Heart left ventricle (tissue), 16 donors: ENCODE measurements at regions of chr10 and their contacts with region 1.

Region 1: GRCh38 chr10:17923728-17924127 is 28.0 kb upstream of the SLC39A12 start:
- DNase-seq: peak in 1 of 5 donors; percentile 22
- ATAC-seq: peak in 1 of 4 donors; percentile 58
- H3K4me3 ChIP-seq: no peak overlapping the region
- H3K27ac ChIP-seq: peak overlapping the region in 2 of 12 donors; percentile 14 to 39
- H3K4me1 ChIP-seq: peaks cover 0 to 15% (median 1%) of the 10 kb centered on the region in 12 donors
- H3K27me3 ChIP-seq: no peaks in the 10 kb centered on the region
- CTCF ChIP-seq: no peak
- POLR2A ChIP-seq: no peak

Region 2: DNA sequence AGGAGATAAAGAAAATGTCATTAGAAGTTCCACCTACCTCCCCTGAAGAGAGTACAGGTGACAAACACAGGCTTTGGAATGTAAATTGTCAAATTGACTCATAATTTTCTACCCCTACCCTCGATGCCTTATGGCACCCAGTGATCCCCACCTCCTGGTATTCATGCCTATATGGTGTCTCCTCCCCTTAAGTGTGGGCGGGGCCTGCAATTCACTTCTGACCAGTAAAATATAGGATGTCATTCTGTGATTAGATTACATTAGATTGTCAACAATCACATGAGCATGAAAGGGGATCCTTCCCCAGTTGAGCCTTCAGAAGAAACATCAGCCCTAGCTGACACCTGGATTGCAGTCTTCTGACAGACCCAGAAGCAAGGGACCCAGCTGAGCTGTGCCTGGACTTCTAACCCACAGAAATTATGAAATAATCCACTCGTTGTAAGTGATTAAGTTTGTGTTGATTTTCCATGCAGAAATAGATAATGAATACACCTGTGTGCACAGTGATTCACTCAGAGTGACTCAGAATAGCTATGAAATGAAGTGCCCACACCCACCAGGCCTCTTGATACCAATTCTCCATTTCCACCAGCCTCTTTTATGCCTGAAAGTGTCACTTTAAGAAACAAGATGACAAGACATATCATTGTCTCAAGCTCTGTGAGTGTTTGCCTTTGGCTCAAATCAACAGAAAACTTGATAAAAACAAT is 19.5 kb after region 1 on chr10:
- intact Hi-C with region 1: loop called in 1 of 10 experiments (anchors 2 kb)
- DNase-seq: no peak
- ATAC-seq: no peak
- H3K4me3 ChIP-seq: no peak overlapping the region
- H3K27ac ChIP-seq: no peak overlapping the region
- H3K4me1 ChIP-seq: no peaks in the 10 kb centered on the region
- H3K27me3 ChIP-seq: no peaks in the 10 kb centered on the region
- CTCF ChIP-seq: no peak
- POLR2A ChIP-seq: no peak